Colonic mucosa (tissue), 4 donors: ENCODE measurements at regions of chr22 and their contacts with region 1.

Region 1: DNA sequence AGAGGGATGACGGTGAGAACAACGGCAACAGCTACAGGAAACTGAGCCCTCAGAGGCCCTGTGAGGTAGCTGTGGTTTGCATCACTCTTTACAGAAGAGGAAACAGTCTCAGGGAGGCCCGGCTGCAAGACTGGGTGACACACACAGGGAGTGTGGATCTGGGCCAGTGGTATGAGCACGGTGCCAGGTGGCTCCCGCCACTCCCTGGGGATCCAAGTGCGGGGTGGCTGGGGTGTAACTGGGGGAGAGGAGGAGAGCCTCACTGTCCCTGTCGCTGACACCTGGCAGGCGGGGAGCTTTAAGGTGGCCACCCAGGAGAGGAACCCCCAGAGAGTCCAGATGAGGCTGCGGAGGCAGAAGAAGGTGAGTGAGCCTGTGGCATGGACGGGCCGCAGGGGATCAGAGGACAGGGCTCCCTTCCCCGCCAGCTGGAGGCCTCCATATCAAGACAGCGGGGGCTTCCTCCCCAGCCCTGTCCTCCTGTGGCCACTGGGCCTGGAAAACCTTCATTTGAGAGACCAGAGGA is 5.6 kb downstream of the RGL4 start:
- DNase-seq: no peak
- H3K4me3 ChIP-seq: no peak overlapping the region
- H3K27ac ChIP-seq: peak overlapping the region; percentile 8
- H3K4me1 ChIP-seq: no peaks in the 10 kb centered on the region
- H3K27me3 ChIP-seq: no peaks in the 10 kb centered on the region
- CTCF ChIP-seq: no peak

Region 2: GRCh38 chr22:23632178-23632577 is 64.2 kb before region 1 on chr22 and contains the start of gene DRICH1:
- intact Hi-C with region 1: loop called (anchors 10 kb)
- DNase-seq: no peak
- H3K4me3 ChIP-seq: no peak within 1 kb of the TSS
- H3K27ac ChIP-seq: no peak within 1 kb of the TSS
- H3K4me1 ChIP-seq: no peaks in the 10 kb centered on the region
- H3K27me3 ChIP-seq: no peaks in the 10 kb centered on the region
- CTCF ChIP-seq: no peak
- total RNA-seq, gene DRICH1: 0.35 to 0.79 TPM